HCT116 (cell line): ENCODE measurements at regions of chr1 and their contacts with region 1.

Region 1: GRCh38 chr1:186375088-186375953 is at the starts of genes ODR4 and TPR:
- DNase-seq: peak; percentile 100
- ATAC-seq: peak; percentile 91
- H3K4me3 ChIP-seq: peak within 1 kb of the TSS; percentile 94 to 96
- H3K27ac ChIP-seq: peak within 1 kb of the TSS; percentile 87
- H3K4me1 ChIP-seq: peaks cover 5 to 20% of the 10 kb centered on the region in 2 experiments; a peak in 3 of 4 replicates
- H3K27me3 ChIP-seq: no peaks in the 10 kb centered on the region
- CTCF ChIP-seq: peak; percentile 87 to 99 (median 96)
- POLR2A ChIP-seq: peak; percentile 58
- RAD21 ChIP-seq: peak; percentile 39; the same call in 1 of the 2 replicates
- total RNA-seq, gene ODR4: 18.4 TPM
- total RNA-seq, gene TPR: 131 TPM

Region 2: GRCh38 chr1:186118724-186119123 is 256.6 kb before region 1 on chr1:
- CTCF ChIA-PET with region 1: no interaction called
- POLR2A ChIA-PET with region 1: no interaction called
- RAD21 ChIA-PET with region 1: no interaction called
- intact Hi-C with region 1: no loop called
- DNase-seq: no peak
- ATAC-seq: no peak
- H3K4me3 ChIP-seq: no peak overlapping the region
- H3K27ac ChIP-seq: no peak overlapping the region
- H3K4me1 ChIP-seq: no peaks in the 10 kb centered on the region
- H3K27me3 ChIP-seq: no peaks in the 10 kb centered on the region
- CTCF ChIP-seq: no peak
- POLR2A ChIP-seq: no peak
- RAD21 ChIP-seq: no peak

Region 3: DNA sequence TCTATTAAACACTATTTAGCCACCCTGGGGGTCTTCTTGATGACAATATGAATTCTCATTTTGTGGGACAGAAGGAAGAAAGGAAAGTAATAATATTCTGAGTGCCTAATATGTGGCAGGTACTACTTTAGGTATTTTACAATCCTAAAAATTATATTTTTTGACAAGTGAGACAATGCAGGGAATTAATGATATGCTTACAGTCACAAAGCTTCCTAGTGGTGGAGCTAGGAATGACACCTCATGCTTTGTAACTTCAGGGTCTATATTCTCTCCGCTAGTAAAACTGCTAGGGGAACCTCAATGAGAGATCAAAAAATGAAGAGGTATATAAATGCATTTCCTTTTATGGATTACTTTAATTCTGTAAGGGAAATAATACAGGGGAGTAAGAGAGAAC is 44.6 kb before region 1 on chr1:
- CTCF ChIA-PET with region 1: interaction called, 4 read pairs
- POLR2A ChIA-PET with region 1: interaction called, 3 read pairs
- RAD21 ChIA-PET with region 1: no interaction called
- intact Hi-C with region 1: loop called (anchors 5 kb)
- DNase-seq: peak; percentile 4
- ATAC-seq: peak; percentile 63
- H3K4me3 ChIP-seq: no peak overlapping the region
- H3K27ac ChIP-seq: no peak overlapping the region
- H3K4me1 ChIP-seq: no peaks in the 10 kb centered on the region
- H3K27me3 ChIP-seq: no peaks in the 10 kb centered on the region
- CTCF ChIP-seq: peak in 2 of 3 experiments; percentile 51 to 62; a peak in 4 of 6 replicates
- POLR2A ChIP-seq: no peak
- RAD21 ChIP-seq: no peak

Region 4: DNA sequence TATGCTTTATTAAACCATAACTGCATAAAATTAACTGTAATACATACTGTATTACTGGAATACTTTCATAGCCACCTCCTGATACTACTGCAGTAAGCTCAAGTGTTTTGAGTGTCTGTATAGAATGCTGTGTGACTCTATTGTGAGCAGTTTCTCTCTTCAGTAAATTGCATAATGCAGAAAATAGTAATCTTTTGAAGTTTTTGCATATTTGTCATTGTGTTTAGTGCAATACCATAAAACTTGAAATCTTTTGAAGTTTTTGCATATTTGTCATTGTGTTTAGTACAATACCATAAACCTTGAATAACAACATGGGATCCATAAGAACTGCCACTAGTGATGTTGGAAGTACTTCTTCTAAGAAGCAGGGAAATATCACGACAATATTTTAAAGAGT is 11.4 kb before region 1 on chr1:
- CTCF ChIA-PET with region 1: interaction called, 10 read pairs
- POLR2A ChIA-PET with region 1: interaction called, 5 read pairs
- RAD21 ChIA-PET with region 1: no interaction called
- intact Hi-C with region 1: no loop called
- DNase-seq: no peak
- ATAC-seq: no peak
- H3K4me3 ChIP-seq: no peak overlapping the region
- H3K27ac ChIP-seq: no peak overlapping the region
- H3K4me1 ChIP-seq: no peaks in the 10 kb centered on the region
- H3K27me3 ChIP-seq: no peaks in the 10 kb centered on the region
- CTCF ChIP-seq: no peak
- POLR2A ChIP-seq: no peak
- RAD21 ChIP-seq: no peak

Region 5: DNA sequence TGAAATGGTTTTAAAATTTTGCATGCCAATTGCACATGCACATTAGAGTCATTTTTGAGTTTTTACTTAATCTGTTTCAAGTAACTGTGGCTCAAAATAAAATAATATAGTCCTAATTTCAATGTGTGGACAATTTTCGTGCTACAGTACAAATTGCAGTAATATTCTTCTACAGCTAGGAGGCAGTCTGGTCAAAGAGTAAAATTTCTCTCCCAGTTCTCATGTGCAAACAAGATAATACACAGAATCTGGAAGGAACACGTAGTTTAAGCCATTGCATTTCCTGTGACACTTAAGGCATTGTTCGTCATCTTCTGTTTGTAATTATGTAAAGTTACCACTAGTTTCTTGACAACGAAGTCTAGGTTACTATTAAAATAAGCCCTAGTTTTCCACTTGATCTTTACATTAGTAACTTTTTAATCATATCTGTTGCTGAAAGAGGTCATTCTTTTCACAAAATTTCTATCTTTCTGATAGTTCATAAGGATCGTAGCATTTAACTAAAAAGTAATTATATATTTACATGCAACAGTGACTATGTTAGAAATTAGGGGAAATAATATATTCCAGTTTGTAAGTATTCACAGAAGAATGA is 29.2 kb after region 1 on chr1:
- CTCF ChIA-PET with region 1: interaction called, 12 read pairs
- POLR2A ChIA-PET with region 1: no interaction called
- RAD21 ChIA-PET with region 1: no interaction called
- intact Hi-C with region 1: no loop called
- DNase-seq: no peak
- ATAC-seq: no peak
- H3K4me3 ChIP-seq: no peak overlapping the region
- H3K27ac ChIP-seq: no peak overlapping the region
- H3K4me1 ChIP-seq: no peaks in the 10 kb centered on the region
- H3K27me3 ChIP-seq: no peaks in the 10 kb centered on the region
- CTCF ChIP-seq: peak; percentile 28 to 72 (median 68); a peak in 5 of 6 replicates
- POLR2A ChIP-seq: no peak
- RAD21 ChIP-seq: peak; percentile 38; the same call in 1 of the 2 replicates